ENCODE measurements at regions of chr11 and their contacts with region 1.

Region 1: GRCh38 chr11:76008474-76008873 is 193.5 kb downstream of the UVRAG start:
- DNase-seq: no peak
- H3K4me3 ChIP-seq: no peak overlapping the region
- H3K27ac ChIP-seq: no peak overlapping the region
- H3K4me1 ChIP-seq: no peaks in the 10 kb centered on the region
- H3K27me3 ChIP-seq: no peaks in the 10 kb centered on the region
- CTCF ChIP-seq: no peak

Region 2: DNA sequence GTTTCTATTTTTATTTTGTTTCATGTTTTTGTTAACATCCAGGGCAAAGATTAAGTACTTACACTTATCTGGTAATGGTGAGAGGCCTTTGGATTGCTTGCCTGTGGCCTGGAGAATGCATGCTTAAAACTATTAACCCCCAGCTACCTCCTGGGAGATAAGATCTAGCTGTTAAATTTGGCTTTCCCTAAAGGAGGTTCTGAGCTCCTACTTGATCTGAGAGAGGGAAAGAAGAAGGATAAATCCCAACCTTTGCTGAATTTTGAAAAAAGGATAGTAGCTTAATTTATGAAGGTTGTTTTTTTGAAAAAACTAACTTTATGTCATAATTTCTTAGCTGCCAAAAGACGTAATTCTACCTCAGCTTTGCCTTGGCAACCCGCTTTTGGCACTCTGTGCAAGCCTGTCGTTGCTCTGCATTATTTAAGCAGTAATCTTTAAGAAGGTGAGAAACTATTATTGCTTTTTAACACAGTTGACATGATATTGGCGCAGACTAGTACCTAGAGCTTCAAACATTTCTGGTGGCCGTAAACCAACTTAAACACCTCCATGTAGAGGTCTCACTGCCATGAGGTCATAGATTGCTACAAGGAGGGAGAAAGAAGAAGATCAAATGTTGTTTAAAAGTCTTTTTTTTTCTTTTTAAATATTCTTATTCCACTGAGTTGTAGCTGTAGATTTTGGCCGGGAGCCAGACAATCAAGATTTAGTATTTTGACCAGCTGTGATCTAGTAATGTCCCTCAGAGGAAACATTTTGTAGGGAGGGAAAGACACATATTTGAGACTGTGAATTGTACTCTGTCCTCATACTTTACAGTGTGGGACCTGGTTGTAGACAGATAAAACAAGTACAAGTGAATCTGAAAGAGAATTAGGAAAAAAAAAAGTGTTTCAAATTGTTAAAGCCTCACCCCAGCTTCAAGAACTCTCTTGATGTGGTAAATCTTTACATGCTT is 123.5 kb after region 1 on chr11:
- CTCF ChIA-PET with region 1: no interaction called
- POLR2A ChIA-PET with region 1: interaction called, 10 read pairs
- intact Hi-C with region 1: no loop called
- DNase-seq: no peak
- H3K4me3 ChIP-seq: no peak overlapping the region
- H3K27ac ChIP-seq: no peak overlapping the region
- H3K4me1 ChIP-seq: peaks cover 20% of the 10 kb centered on the region
- H3K27me3 ChIP-seq: no peaks in the 10 kb centered on the region
- CTCF ChIP-seq: no peak